ENCODE measurements at regions of chr14 and their contacts with region 1.

Region 1: GRCh38 chr14:20454516-20455354 is at the starts of genes APEX1 and OSGEP:
- DNase-seq: peak; percentile 100
- H3K4me3 ChIP-seq: peak within 1 kb of the TSS; percentile 99
- H3K27ac ChIP-seq: peak within 1 kb of the TSS; percentile 78
- H3K4me1 ChIP-seq: peaks cover 42% of the 10 kb centered on the region
- CTCF ChIP-seq: no peak
- total RNA-seq, gene APEX1: 110 and 117 TPM in 2 replicates
- total RNA-seq, gene OSGEP: 85.2 and 86.6 TPM in 2 replicates

Region 2: DNA sequence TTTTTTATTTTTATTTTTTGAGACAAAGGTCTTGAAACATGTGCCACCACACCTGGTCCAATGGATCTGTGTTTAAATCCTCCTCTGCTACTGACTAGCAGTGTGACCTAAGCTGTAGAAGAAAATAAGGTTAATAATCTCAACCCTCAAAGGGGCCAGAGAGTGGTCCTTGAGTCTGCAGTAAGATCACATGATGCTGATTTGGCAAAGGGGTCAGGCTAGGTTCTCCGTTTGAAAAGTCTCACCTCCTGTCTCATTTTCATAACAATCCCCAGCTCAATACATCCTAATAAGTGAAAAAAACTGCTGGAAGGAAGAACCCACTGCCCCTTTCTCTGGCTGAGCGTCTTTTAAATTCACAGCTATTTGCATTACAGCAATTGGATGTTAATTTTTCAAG is 33.5 kb before region 1 on chr14:
- CTCF ChIA-PET with region 1: interaction called, 7 read pairs
- POLR2A ChIA-PET with region 1: interaction called, 20 read pairs
- intact Hi-C with region 1: no loop called
- DNase-seq: no peak
- H3K4me3 ChIP-seq: no peak overlapping the region
- H3K27ac ChIP-seq: no peak overlapping the region
- H3K4me1 ChIP-seq: peaks cover 47% of the 10 kb centered on the region
- CTCF ChIP-seq: no peak

Region 3: DNA sequence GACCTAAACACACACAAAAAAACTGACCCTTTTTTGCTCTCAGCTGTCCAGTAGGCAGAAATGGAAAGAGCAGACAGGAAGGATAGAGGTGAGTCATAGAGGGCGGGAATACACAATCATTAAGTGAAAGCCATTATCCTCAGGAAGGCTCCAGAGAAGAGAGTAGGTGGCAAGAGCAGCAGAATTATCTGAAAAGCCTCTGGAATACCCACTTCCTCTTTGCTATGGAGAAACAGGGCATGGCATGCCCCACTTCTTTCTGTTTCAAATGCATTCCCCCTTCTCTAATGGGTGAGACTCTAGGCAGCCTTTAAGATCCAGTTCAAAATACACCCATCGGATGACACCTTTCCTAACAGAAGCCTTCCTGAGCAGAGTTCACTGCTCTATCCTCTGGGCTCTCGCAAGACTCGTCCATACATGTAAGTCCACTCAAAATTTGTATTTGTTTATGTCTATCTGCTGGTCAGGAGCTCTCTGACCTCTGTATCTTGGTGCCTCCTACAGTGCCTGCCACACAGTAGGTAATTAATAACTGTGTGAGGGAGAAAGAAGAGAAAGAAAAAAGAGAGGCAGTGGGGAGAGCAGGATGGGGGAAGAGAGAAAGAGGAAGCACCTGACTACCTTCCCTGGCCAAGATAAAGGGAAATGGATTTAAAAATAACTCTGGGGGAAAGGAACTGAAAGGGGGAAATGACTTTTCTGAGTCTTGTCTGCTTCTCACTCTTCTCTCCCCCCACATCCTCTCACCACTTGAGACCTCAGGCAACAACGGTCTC is 27.3 kb before region 1 on chr14:
- CTCF ChIA-PET with region 1: interaction called, 3 read pairs
- POLR2A ChIA-PET with region 1: interaction called, 14 read pairs
- intact Hi-C with region 1: no loop called
- DNase-seq: peak; percentile 82
- H3K4me3 ChIP-seq: peak overlapping the region; percentile 54
- H3K27ac ChIP-seq: peak overlapping the region; percentile 94
- H3K4me1 ChIP-seq: peaks cover 55% of the 10 kb centered on the region
- CTCF ChIP-seq: no peak

Region 4: GRCh38 chr14:20469242-20469889 is 14.6 kb after region 1 on chr14 and contains the start of gene PNP:
- CTCF ChIA-PET with region 1: no interaction called
- POLR2A ChIA-PET with region 1: interaction called, 32 read pairs
- intact Hi-C with region 1: no loop called
- DNase-seq: peak; percentile 92
- H3K4me3 ChIP-seq: peak within 1 kb of the TSS; percentile 83
- H3K27ac ChIP-seq: peak within 1 kb of the TSS; percentile 71
- H3K4me1 ChIP-seq: peaks cover 23% of the 10 kb centered on the region
- CTCF ChIP-seq: peak; percentile 21; the same call in 1 of the 2 replicates
- total RNA-seq, gene PNP: 120 and 127 TPM in 2 replicates

Region 5: GRCh38 chr14:20836668-20837338 is 382.1 kb after region 1 on chr14:
- CTCF ChIA-PET with region 1: no interaction called
- POLR2A ChIA-PET with region 1: no interaction called
- intact Hi-C with region 1: no loop called
- DNase-seq: no peak
- H3K4me3 ChIP-seq: no peak overlapping the region
- H3K27ac ChIP-seq: no peak overlapping the region
- H3K4me1 ChIP-seq: no peaks in the 10 kb centered on the region
- CTCF ChIP-seq: peak; percentile 51